ENCODE measurements at regions of chr1 and their contacts with region 1.

Region 1: GRCh38 chr1:42335050-42335808 is at the start of gene FOXJ3:
- ATAC-seq: peak; percentile 77 to 87 (median 81)
- H3K4me3 ChIP-seq: peak within 1 kb of the TSS; percentile 83 to 97 (median 94)
- H3K27ac ChIP-seq: peak within 1 kb of the TSS; percentile 95 to 98
- H3K4me1 ChIP-seq: peaks cover 28 to 31% of the 10 kb centered on the region in 2 donors
- total RNA-seq, gene FOXJ3: 17.8 to 42.4 (median 32.2) TPM

Region 2: GRCh38 chr1:42439940-42440339 is 104.7 kb after region 1 on chr1:
- in situ Hi-C with region 1: loop called in 1 of 9 experiments (anchors 25 kb)
- ATAC-seq: peak in 2 of 8 experiments; percentile 32 to 61
- H3K4me3 ChIP-seq: no peak overlapping the region
- H3K27ac ChIP-seq: no peak overlapping the region
- H3K4me1 ChIP-seq: no peaks in the 10 kb centered on the region

Region 3: DNA sequence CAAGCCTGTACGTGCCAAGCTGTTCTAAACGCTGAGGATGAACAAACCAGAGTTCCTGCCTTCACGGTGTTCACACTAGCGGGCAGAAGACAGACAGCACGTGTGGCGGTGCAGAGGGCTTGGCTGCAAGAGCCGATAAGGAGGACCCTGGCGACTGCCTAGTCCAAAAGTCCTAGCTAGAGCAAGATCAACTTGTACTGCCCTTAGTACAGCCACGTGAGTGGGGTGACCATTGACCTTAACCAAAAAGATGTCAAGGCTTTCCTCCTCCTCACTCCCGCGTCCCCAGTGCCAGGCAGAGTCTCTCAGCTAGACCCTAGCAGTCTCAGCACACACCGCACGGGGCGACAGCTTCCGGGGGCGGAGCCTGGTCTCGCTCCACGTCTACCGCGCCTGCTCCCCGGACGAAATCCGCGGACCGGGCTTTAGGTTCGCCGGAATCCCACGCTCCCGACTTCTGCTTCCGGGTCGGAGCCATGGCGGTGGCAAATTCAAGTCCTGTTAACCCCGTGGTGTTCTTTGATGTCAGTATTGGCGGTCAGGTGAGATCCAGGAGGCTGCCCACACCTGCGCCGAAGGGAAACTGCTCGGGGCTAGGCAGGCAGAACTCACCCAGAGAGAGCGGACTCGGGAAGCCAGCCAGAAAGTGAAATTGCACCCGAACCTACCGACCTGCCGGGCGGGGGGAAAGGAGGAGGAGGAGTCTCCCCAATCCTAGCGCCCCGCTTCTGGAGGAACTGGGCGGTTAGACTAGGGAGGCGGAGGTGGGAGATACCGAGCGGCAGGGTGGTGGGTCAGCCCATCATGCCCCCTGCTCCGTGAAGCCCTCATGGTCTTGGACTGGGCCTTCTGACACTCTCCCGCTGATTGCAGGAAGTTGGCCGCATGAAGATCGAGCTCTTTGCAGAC is 323.0 kb after region 1 on chr1 and contains the start of gene PPIH:
- in situ Hi-C with region 1: loop called in 1 of 9 experiments (anchors 25 kb)
- ATAC-seq: peak; percentile 98 to 100 (median 99)
- H3K4me3 ChIP-seq: peak within 1 kb of the TSS; percentile 63 to 86 (median 70)
- H3K27ac ChIP-seq: peak within 1 kb of the TSS; percentile 91 to 96
- H3K4me1 ChIP-seq: peaks cover 12 to 19% of the 10 kb centered on the region in 2 donors
- total RNA-seq, gene PPIH: 26.7 to 87.0 (median 59.4) TPM

Measured in motor neuron (in vitro differentiated cells).